ENCODE measurements at regions of chr4 and their contacts with region 1.

Region 1: GRCh38 chr4:68375667-68376559 is 26.0 kb upstream of the YTHDC1 start:
- DNase-seq: peak; percentile 45
- H3K4me3 Mint-ChIP-seq: peak overlapping the region; percentile 51
- H3K27ac Mint-ChIP-seq: no peak overlapping the region
- H3K4me1 Mint-ChIP-seq: peaks cover 11% of the 10 kb centered on the region
- H3K27me3 Mint-ChIP-seq: peaks cover 2% of the 10 kb centered on the region

Region 2: DNA sequence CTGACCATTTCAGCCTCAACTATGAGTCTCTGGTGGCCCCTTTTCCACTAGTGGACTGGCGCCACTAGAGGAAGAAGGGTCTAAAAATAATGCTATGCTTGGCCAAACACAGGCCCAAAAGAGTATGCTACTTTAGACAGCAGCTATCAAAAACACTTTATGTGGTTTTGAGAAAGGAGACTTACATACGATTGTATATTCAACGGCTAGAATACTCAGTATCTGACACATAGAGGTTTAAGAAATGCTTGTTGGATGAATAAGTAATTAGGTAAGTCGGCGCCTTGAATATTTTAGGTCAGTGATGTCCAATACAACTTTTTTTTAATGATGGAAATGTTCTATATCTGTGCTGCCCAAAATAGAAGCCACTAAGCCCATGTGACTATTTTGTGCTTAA is 386.9 kb before region 1 on chr4:
- CTCF ChIA-PET with region 1: no interaction called
- POLR2A ChIA-PET with region 1: no interaction called
- intact Hi-C with region 1: loop called (anchors 2 kb)
- DNase-seq: no peak
- H3K4me3 Mint-ChIP-seq: no peak overlapping the region
- H3K27ac Mint-ChIP-seq: no peak overlapping the region
- H3K4me1 Mint-ChIP-seq: no peaks in the 10 kb centered on the region
- H3K27me3 Mint-ChIP-seq: peaks cover 2% of the 10 kb centered on the region

Region 3: DNA sequence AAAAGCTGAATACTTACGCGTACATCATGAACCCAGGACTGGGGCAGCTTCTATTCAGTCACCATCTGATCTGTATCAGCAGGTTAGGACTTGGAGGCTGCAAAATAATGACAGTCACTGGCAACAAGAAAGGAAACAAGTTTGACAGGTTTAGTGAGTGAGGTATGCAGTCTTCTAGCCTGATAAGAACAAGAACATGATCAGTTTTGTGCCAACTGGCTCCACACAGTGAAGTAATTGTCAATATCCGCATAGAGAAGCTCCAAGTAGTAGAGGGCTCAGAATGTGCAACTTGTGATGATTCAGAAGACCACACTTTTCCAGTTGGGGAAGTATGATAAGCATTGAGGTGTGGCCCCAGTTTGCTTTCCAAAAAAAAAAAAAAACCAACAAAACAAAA is 246.1 kb before region 1 on chr4 and contains the start of gene TMPRSS11F:
- CTCF ChIA-PET with region 1: no interaction called
- POLR2A ChIA-PET with region 1: no interaction called
- intact Hi-C with region 1: no loop called
- DNase-seq: no peak
- H3K4me3 Mint-ChIP-seq: no peak within 1 kb of the TSS
- H3K27ac Mint-ChIP-seq: no peak within 1 kb of the TSS
- H3K4me1 Mint-ChIP-seq: no peaks in the 10 kb centered on the region
- H3K27me3 Mint-ChIP-seq: peaks cover 2% of the 10 kb centered on the region
- total RNA-seq, gene TMPRSS11F: not detected

Region 4: GRCh38 chr4:68141852-68142251 is 234.1 kb before region 1 on chr4:
- CTCF ChIA-PET with region 1: no interaction called
- POLR2A ChIA-PET with region 1: no interaction called
- intact Hi-C with region 1: no loop called
- DNase-seq: no peak
- H3K4me3 Mint-ChIP-seq: no peak overlapping the region
- H3K27ac Mint-ChIP-seq: no peak overlapping the region
- H3K4me1 Mint-ChIP-seq: no peaks in the 10 kb centered on the region
- H3K27me3 Mint-ChIP-seq: no peaks in the 10 kb centered on the region

Region 5: GRCh38 chr4:68288393-68288740 is 87.5 kb before region 1 on chr4:
- CTCF ChIA-PET with region 1: interaction called, 10 read pairs
- POLR2A ChIA-PET with region 1: no interaction called
- intact Hi-C with region 1: loop called (anchors 5 kb)
- DNase-seq: no peak
- H3K4me3 Mint-ChIP-seq: no peak overlapping the region
- H3K27ac Mint-ChIP-seq: no peak overlapping the region
- H3K4me1 Mint-ChIP-seq: no peaks in the 10 kb centered on the region
- H3K27me3 Mint-ChIP-seq: peaks cover 4% of the 10 kb centered on the region

Region 6: DNA sequence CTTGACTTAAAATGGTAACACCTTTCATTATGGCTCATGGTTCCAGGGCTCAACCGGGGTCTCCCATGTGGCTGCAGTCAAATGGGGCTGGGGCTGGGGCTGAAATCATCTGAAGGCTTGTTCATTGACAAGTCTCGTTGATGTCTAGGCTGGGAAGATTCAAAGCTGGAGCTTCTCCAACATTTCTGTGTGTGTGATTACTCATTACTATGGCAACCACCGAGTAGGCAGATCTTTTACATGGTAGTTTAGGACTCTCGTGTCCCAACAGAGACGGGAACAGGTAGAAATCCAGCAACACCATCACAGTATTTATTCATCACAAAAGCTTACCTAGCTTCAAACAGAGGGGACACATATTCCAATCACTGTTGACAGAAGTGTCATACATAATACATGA is 33.8 kb before region 1 on chr4:
- CTCF ChIA-PET with region 1: interaction called, 10 read pairs
- POLR2A ChIA-PET with region 1: no interaction called
- intact Hi-C with region 1: loop called (anchors 5 kb)
- DNase-seq: no peak
- H3K4me3 Mint-ChIP-seq: no peak overlapping the region
- H3K27ac Mint-ChIP-seq: no peak overlapping the region
- H3K4me1 Mint-ChIP-seq: peaks cover 63% of the 10 kb centered on the region
- H3K27me3 Mint-ChIP-seq: no peaks in the 10 kb centered on the region

Measured in activated CD4-positive, alpha-beta memory T cell treated with anti-CD3 and anti-CD28 coated beads for 36 hours (primary cell).